Ovary (tissue), 10 donors: ENCODE measurements at regions of chr2 and their contacts with region 1.

Region 1: GRCh38 chr2:61538200-61538919 is at the start of gene XPO1:
- DNase-seq: peak; percentile 99 to 100 (median 100)
- H3K4me3 ChIP-seq: peak within 1 kb of the TSS; percentile 82
- H3K27ac ChIP-seq: peak within 1 kb of the TSS; percentile 87 to 88
- H3K4me1 ChIP-seq: peaks cover 4% of the 10 kb centered on the region
- H3K27me3 ChIP-seq: no peaks in the 10 kb centered on the region
- CTCF ChIP-seq: peak in 1 of 3 donors; percentile 21
- EP300 ChIP-seq: peak; percentile 13
- POLR2A ChIP-seq: peak; percentile 98
- total RNA-seq, gene XPO1: 93.5 to 211 (median 114) TPM

Region 2: GRCh38 chr2:61470965-61471904 is 67.1 kb before region 1 on chr2 and contains the start of gene USP34:
- intact Hi-C with region 1: loop called in 3 of 4 experiments (anchors 5 to 10 kb)
- DNase-seq: peak; percentile 93 to 95 (median 93)
- H3K4me3 ChIP-seq: peak within 1 kb of the TSS; percentile 57
- H3K27ac ChIP-seq: peak within 1 kb of the TSS; percentile 97
- H3K4me1 ChIP-seq: peaks cover 11% of the 10 kb centered on the region
- H3K27me3 ChIP-seq: no peaks in the 10 kb centered on the region
- CTCF ChIP-seq: no peak
- EP300 ChIP-seq: no peak
- POLR2A ChIP-seq: peak; percentile 88
- total RNA-seq, gene USP34: 85.8 to 132 (median 116) TPM

Region 3: GRCh38 chr2:61493523-61493942 is 44.8 kb before region 1 on chr2:
- intact Hi-C with region 1: no loop called
- DNase-seq: no peak
- H3K4me3 ChIP-seq: no peak overlapping the region
- H3K27ac ChIP-seq: no peak overlapping the region
- H3K4me1 ChIP-seq: no peaks in the 10 kb centered on the region
- H3K27me3 ChIP-seq: no peaks in the 10 kb centered on the region
- CTCF ChIP-seq: no peak
- EP300 ChIP-seq: no peak
- POLR2A ChIP-seq: no peak

Region 4: GRCh38 chr2:61620244-61621159 is 82.1 kb after region 1 on chr2:
- intact Hi-C with region 1: no loop called
- DNase-seq: no peak
- H3K4me3 ChIP-seq: no peak overlapping the region
- H3K27ac ChIP-seq: no peak overlapping the region
- H3K4me1 ChIP-seq: no peaks in the 10 kb centered on the region
- H3K27me3 ChIP-seq: no peaks in the 10 kb centered on the region
- CTCF ChIP-seq: no peak
- EP300 ChIP-seq: no peak
- POLR2A ChIP-seq: no peak

Region 5: GRCh38 chr2:61694312-61695274 is 156.2 kb after region 1 on chr2:
- intact Hi-C with region 1: loop called in 1 of 4 experiments (anchors 5 kb)
- DNase-seq: peak; percentile 96 to 98 (median 97)
- H3K4me3 ChIP-seq: peak overlapping the region; percentile 77
- H3K27ac ChIP-seq: peak overlapping the region; percentile 5 to 69
- H3K4me1 ChIP-seq: peaks cover 1% of the 10 kb centered on the region
- H3K27me3 ChIP-seq: no peaks in the 10 kb centered on the region
- CTCF ChIP-seq: peak in 2 of 3 donors; percentile 27 to 67
- EP300 ChIP-seq: no peak
- POLR2A ChIP-seq: peak; percentile 65

Region 6: DNA sequence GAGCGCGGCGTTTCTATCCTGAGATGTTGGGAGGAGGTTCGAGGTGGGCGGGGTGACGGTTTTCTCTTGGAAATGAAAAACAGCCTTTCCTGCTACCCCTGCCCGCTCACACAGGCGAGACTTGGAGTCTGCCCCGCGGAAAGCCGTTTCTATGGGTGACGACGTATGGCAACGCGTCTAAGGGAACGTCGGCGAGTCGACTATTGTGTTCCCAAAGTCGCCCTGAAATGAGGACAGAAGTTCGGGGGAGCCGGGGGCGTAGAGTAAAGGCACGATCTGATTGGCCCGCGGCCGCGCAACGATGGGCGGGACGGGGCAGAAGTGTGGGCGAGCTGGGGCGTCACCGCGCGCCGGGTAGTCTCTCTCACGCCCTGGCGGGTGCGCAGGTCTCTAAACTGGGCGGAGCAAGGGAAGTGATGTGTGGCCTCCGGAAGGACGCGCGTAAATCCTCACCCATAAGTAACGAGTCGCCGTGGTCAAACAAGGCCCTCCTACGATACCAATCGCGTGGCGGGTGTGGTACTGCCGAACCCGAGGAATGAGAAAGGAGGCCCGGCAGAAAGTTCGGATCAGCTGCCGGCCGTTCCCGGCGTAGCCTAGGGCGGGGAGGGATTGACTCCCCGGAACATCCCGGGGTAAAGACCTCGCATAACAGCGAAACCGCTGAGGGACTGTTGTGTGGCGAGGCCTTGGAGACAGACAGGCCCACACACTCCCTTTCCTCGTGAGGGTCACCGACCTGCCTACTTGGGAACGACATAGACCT is 225.9 kb after region 1 on chr2:
- intact Hi-C with region 1: loop called in 1 of 4 experiments (anchors 2 kb)
- DNase-seq: peak; percentile 97 to 98 (median 98)
- H3K4me3 ChIP-seq: peak overlapping the region; percentile 81
- H3K27ac ChIP-seq: peak overlapping the region; percentile 97 to 100
- H3K4me1 ChIP-seq: no peaks in the 10 kb centered on the region
- H3K27me3 ChIP-seq: no peaks in the 10 kb centered on the region
- CTCF ChIP-seq: peak in 1 of 3 donors; percentile 7
- EP300 ChIP-seq: peak; percentile 13
- POLR2A ChIP-seq: peak; percentile 96

Region 7: GRCh38 chr2:61888267-61889055 is 350.1 kb after region 1 on chr2 and contains the start of gene CCT4:
- intact Hi-C with region 1: loop called in 1 of 4 experiments (anchors 10 kb)
- DNase-seq: peak; percentile 86 to 95 (median 91)
- H3K4me3 ChIP-seq: peak within 1 kb of the TSS; percentile 80
- H3K27ac ChIP-seq: peak within 1 kb of the TSS; percentile 92 to 99
- H3K4me1 ChIP-seq: peaks cover 8% of the 10 kb centered on the region
- H3K27me3 ChIP-seq: no peaks in the 10 kb centered on the region
- CTCF ChIP-seq: peak in 1 of 3 donors; percentile 38
- EP300 ChIP-seq: no peak
- POLR2A ChIP-seq: peak; percentile 91
- total RNA-seq, gene CCT4: 99.7 to 200 (median 144) TPM